Activated CD8-positive, alpha-beta T cell treated with anti-CD3 and anti-CD28 coated beads for 36 hours (primary cell): ENCODE measurements at regions of chr6 and their contacts with region 1.

Region 1: DNA sequence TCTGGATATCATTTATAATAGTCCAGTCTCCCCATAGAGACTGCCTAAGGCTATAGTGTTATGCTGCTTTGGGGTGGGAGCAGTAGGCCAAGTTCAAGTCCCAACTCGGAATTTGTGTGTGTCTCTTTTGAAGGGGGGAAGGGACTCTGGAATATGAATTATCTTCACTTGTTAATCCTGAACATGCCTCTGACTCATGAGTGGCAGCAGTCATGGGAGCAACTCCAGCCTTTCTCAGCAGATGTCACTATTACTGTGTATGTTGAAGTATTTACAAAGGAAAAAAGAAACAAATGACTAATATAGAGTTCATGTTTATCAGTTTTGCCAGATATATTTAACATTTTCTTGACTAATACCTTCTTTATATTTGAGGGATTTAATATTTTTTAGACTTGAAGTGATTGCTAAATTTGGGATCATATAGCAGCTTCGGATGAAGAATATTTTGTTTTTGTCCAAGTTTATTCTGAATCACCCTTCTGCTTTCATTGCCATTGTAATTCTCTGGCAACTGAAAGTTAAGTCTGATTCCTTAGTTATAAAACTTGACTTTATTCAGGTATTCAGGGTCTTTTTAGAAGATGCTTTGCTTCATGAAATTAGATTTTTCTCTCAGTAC is 23.4 kb downstream of the FAM217A start:
- DNase-seq: no peak
- ATAC-seq: no peak
- H3K4me3 Mint-ChIP-seq: no peak overlapping the region
- H3K27ac Mint-ChIP-seq: no peak overlapping the region
- H3K4me1 Mint-ChIP-seq: peaks cover 31% of the 10 kb centered on the region
- H3K27me3 Mint-ChIP-seq: no peaks in the 10 kb centered on the region
- CTCF ChIP-seq: no peak

Region 2: DNA sequence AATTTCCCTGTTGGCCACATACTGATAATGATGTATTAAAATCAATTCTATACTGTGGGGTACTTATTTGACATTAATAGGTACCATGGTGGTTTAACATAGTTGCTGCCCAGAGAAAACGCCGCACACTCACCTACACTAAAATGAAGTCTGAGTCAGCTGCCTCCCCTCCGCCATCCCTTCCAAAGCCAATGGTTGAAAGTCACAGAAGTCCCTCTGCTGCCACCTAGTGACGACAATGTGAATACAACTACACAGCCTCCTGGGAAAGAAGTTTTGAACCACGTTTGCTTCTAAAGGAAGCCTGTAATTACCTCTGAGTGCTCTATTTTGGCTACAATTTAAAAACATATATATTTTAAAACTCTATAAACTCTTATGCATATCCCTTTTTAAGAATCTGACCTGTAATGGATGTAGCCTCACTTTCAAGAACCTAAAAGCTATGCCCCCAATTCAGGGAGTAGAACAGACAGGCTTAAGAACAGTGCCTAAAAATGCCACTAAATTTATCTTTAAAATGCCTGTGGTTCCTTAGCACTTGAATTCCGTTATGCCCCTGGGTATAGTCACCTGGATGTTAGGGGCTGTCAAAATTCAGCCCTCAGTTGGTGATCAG is 100.4 kb after region 1 on chr6:
- CTCF ChIA-PET with region 1: interaction called, 30 read pairs
- POLR2A ChIA-PET with region 1: no interaction called
- intact Hi-C with region 1: loop called (anchors 5 kb)
- DNase-seq: peak; percentile 91
- ATAC-seq: peak; percentile 100
- H3K4me3 Mint-ChIP-seq: no peak overlapping the region
- H3K27ac Mint-ChIP-seq: no peak overlapping the region
- H3K4me1 Mint-ChIP-seq: peaks cover 6% of the 10 kb centered on the region
- H3K27me3 Mint-ChIP-seq: peaks cover 6% of the 10 kb centered on the region
- CTCF ChIP-seq: peak; percentile 80